Dendritic cell treated with granulocyte-macrophage colony-stimulating factor and Interleukin-4, amounts not matched to agents 40 ng/mL and 50 ng/mL, for 4 days (primary cell): ENCODE measurements at regions of chr7 and their contacts with region 1.

Region 1: GRCh38 chr7:66844552-66845378 is 76.3 kb upstream of the TMEM248 start:
- H3K4me3 Mint-ChIP-seq: peak overlapping the region; percentile 87
- H3K27ac Mint-ChIP-seq: peak overlapping the region; percentile 97
- H3K4me1 Mint-ChIP-seq: peaks cover 35% of the 10 kb centered on the region
- H3K27me3 Mint-ChIP-seq: no peaks in the 10 kb centered on the region

Region 2: GRCh38 chr7:66804001-66804400 is 40.8 kb before region 1 on chr7:
- intact Hi-C with region 1: no loop called
- H3K4me3 Mint-ChIP-seq: no peak overlapping the region
- H3K27ac Mint-ChIP-seq: no peak overlapping the region
- H3K4me1 Mint-ChIP-seq: no peaks in the 10 kb centered on the region
- H3K27me3 Mint-ChIP-seq: no peaks in the 10 kb centered on the region

Region 3: GRCh38 chr7:66877577-66878300 is 33.0 kb after region 1 on chr7:
- intact Hi-C with region 1: loop called (anchors 5 kb)
- H3K4me3 Mint-ChIP-seq: peak overlapping the region; percentile 47
- H3K27ac Mint-ChIP-seq: peak overlapping the region; percentile 94
- H3K4me1 Mint-ChIP-seq: peaks cover 29% of the 10 kb centered on the region
- H3K27me3 Mint-ChIP-seq: no peaks in the 10 kb centered on the region

Region 4: DNA sequence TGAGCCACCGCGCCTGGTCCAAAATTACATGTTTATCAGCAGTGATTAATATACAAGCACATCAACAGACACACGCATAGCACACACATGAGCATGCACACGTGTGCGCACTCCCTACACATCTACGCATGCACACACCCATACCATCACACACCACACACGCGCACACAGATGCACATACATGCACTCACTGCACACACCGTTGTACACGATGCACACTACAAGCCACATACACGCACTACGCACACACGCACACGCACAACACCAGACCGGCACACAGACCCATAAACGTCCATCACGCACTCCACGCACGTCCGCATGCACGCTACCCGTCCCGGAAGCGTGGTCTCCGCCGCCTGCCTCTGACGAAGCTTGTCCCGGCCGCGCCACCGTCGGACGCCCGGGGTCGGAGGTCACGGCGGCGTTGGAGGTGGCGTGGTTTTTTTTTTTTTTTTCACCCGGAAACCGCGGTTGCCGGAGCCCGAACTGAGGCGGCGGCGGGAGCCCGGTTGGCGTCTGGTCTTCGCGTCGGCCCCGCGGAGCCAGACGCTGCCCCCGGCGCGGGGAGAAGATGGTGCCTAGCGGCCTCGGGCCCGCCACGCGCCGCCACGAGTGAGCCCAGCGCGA is 76.1 kb after region 1 on chr7 and contains the start of gene TMEM248:
- intact Hi-C with region 1: loop called (anchors 2 kb)
- H3K4me3 Mint-ChIP-seq: peak within 1 kb of the TSS; percentile 91
- H3K27ac Mint-ChIP-seq: peak within 1 kb of the TSS; percentile 80
- H3K4me1 Mint-ChIP-seq: peaks cover 31% of the 10 kb centered on the region
- H3K27me3 Mint-ChIP-seq: no peaks in the 10 kb centered on the region